Activated T-helper 2 cell treated with anti-CD3 and anti-CD28 coated beads, Interferon-gamma antibody, Interleukin-2, Interleukin-4, amounts not matched to agents 10 μg/mL and 5 μg/mL and 100 μg/mL, durations not matched to agents 14 hours and 24 hours and 36 hours (primary cell): ENCODE measurements at regions of chr1 and their contacts with region 1.

Region 1: GRCh38 chr1:114979278-114979891 is 50.2 kb upstream of the TSHB start:
- DNase-seq: peak; percentile 23
- H3K4me3 Mint-ChIP-seq: no peak overlapping the region
- H3K27ac Mint-ChIP-seq: no peak overlapping the region
- H3K4me1 Mint-ChIP-seq: no peaks in the 10 kb centered on the region
- H3K27me3 Mint-ChIP-seq: peaks cover 27% of the 10 kb centered on the region

Region 2: DNA sequence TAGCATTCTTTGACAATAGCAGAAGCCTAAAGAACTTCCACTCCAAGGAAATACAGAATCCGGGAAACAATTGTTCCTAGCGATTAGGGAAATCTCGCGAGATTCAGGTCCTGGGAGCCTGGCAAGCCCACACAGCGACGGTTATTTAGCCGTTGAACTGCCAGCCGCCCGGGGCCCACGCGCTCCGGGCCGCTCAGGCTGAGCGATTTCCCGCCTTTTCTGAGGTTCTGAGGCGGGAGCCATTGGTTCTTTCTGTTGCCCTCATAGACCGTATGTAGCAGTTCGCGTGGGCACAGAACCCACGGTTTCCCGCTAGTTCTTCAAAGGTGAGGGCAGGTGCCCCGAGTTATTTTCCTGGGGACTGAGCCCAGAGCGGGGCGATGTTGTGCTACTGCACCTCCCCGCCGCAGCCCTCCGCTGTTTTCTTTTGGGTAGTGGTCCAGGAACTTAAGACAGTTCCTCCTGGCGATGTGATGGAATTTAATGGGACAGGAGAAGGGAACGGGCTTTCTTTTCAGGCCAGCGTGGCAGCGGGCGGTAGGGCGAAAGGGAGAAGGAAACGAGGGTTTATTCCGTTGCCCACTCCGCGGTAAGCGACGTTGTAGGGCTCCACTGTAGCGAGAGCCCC is 124.6 kb before region 1 on chr1 and contains the start of gene SYCP1:
- intact Hi-C with region 1: no loop called
- DNase-seq: no peak
- H3K4me3 Mint-ChIP-seq: peak within 1 kb of the TSS; percentile 49
- H3K27ac Mint-ChIP-seq: no peak within 1 kb of the TSS
- H3K4me1 Mint-ChIP-seq: peaks cover 7% of the 10 kb centered on the region
- H3K27me3 Mint-ChIP-seq: peaks cover 26% of the 10 kb centered on the region
- total RNA-seq, gene SYCP1: not detected in 2 replicates

Region 3: GRCh38 chr1:115052454-115053083 is 73.2 kb after region 1 on chr1:
- intact Hi-C with region 1: loop called (anchors 1 kb)
- DNase-seq: peak; percentile 27
- H3K4me3 Mint-ChIP-seq: no peak overlapping the region
- H3K27ac Mint-ChIP-seq: no peak overlapping the region
- H3K4me1 Mint-ChIP-seq: peaks cover 6% of the 10 kb centered on the region
- H3K27me3 Mint-ChIP-seq: peaks cover 7% of the 10 kb centered on the region

Region 4: GRCh38 chr1:115112496-115113375 is 133.4 kb after region 1 on chr1:
- intact Hi-C with region 1: loop called (anchors 1 kb)
- DNase-seq: peak; percentile 28
- H3K4me3 Mint-ChIP-seq: no peak overlapping the region
- H3K27ac Mint-ChIP-seq: no peak overlapping the region
- H3K4me1 Mint-ChIP-seq: peaks cover 4% of the 10 kb centered on the region
- H3K27me3 Mint-ChIP-seq: peaks cover 2% of the 10 kb centered on the region